Activated T-helper 1 cell treated with anti-CD3 and anti-CD28 coated beads, Interleukin-12 subunit alpha, Interleukin-12 subunit beta, Interleukin-2, Interleukin-4 antibody, amounts not matched to agents 30 ng/mL and 10 ng/mL and 1 ng/mL, durations not matched to agents 14 hours and 24 hours and 36 hours (primary cell): ENCODE measurements at regions of chrX and their contacts with region 1.

Region 1: GRCh38 chrX:70454441-70455365 is 10.1 kb downstream of the DLG3 start:
- DNase-seq: peak; percentile 67
- H3K4me3 Mint-ChIP-seq: peak overlapping the region; percentile 93
- H3K27ac Mint-ChIP-seq: peak overlapping the region; percentile 96
- H3K4me1 Mint-ChIP-seq: peaks cover 38% of the 10 kb centered on the region
- H3K27me3 Mint-ChIP-seq: no peaks in the 10 kb centered on the region

Region 2: DNA sequence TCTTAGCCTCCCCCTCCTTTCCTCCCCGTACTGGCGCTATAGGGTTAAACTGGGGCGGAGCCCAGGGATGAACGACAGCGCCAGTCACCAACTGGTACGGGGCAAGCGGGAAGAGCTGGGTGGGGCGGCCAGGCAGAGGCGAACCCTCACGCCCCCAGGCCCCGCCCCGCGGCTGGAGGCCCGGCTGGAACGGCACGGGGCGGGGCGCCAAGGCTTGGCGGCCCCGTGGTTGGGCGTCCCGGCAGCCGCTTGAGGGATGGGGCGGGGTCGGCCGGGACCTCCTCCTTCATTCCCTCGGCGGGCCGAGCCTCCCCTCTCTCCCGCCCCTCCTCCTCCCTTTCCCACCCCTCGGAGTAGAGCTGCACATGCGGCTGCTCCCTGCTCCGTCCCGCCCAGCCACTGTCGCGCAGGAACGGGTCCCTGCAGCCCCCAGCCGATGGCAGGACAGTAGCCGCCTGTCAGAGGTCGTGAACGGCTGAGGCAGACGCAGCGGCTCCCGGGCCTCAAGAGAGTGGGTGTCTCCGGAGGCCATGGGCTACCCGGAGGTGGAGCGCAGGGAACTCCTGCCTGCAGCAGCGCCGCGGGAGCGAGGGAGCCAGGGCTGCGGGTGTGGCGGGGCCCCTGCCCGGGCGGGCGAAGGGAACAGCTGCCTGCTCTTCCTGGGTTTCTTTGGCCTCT is 838.8 kb before region 1 on chrX and contains the start of gene EDA:
- intact Hi-C with region 1: loop called (anchors 10 kb)
- DNase-seq: peak; percentile 68
- H3K4me3 Mint-ChIP-seq: peak within 1 kb of the TSS; percentile 77
- H3K27ac Mint-ChIP-seq: no peak within 1 kb of the TSS
- H3K4me1 Mint-ChIP-seq: peaks cover 17% of the 10 kb centered on the region
- H3K27me3 Mint-ChIP-seq: peaks cover 14% of the 10 kb centered on the region
- total RNA-seq, gene EDA: 1.6 and 2.4 TPM in 2 replicates

Region 3: GRCh38 chrX:69793260-69793935 is 661.3 kb before region 1 on chrX:
- intact Hi-C with region 1: no loop called
- DNase-seq: no peak
- H3K4me3 Mint-ChIP-seq: no peak overlapping the region
- H3K27ac Mint-ChIP-seq: no peak overlapping the region
- H3K4me1 Mint-ChIP-seq: no peaks in the 10 kb centered on the region
- H3K27me3 Mint-ChIP-seq: peaks cover 1% of the 10 kb centered on the region

Region 4: DNA sequence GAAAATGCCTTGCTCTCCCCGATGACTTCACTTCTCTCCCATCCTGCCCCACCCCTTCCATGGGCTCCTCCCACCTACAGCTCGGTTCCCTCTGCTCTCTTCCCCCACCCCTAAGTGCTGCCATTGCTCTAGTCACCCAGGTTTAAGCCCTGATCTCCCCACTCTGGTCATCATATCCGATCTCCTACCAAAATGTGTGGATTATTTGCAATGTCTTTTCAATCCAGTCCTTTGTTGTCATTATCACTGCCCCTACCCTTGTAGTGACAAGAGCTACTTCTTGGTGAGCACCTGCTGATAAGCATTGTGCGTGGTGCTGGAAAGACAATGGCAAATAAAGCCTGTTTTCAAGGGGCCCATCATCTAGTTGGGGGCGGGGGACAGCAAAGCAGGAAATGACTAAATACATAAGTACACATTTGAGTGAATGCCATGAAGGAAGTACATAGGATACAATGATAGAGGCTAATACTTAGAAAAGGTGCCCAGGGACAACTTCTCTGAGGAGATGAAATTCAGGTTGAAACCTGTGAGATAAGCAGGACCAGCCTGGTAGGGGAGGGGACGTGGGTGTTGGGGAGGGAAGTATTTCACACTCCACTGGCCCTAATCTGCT is 53.7 kb after region 1 on chrX:
- intact Hi-C with region 1: loop called (anchors 1 kb)
- DNase-seq: no peak
- H3K4me3 Mint-ChIP-seq: peak overlapping the region; percentile 20
- H3K27ac Mint-ChIP-seq: peak overlapping the region; percentile 82
- H3K4me1 Mint-ChIP-seq: peaks cover 51% of the 10 kb centered on the region
- H3K27me3 Mint-ChIP-seq: no peaks in the 10 kb centered on the region

Region 5: GRCh38 chrX:70592091-70592490 is 137.4 kb after region 1 on chrX:
- intact Hi-C with region 1: loop called (anchors 1 kb)
- DNase-seq: peak; percentile 5
- H3K4me3 Mint-ChIP-seq: no peak overlapping the region
- H3K27ac Mint-ChIP-seq: peak overlapping the region; percentile 73
- H3K4me1 Mint-ChIP-seq: peaks cover 25% of the 10 kb centered on the region
- H3K27me3 Mint-ChIP-seq: no peaks in the 10 kb centered on the region

Region 6: GRCh38 chrX:70664726-70665125 is 210.0 kb after region 1 on chrX:
- intact Hi-C with region 1: loop called (anchors 1 kb)
- DNase-seq: no peak
- H3K4me3 Mint-ChIP-seq: no peak overlapping the region
- H3K27ac Mint-ChIP-seq: no peak overlapping the region
- H3K4me1 Mint-ChIP-seq: no peaks in the 10 kb centered on the region
- H3K27me3 Mint-ChIP-seq: peaks cover 4% of the 10 kb centered on the region

Region 7: DNA sequence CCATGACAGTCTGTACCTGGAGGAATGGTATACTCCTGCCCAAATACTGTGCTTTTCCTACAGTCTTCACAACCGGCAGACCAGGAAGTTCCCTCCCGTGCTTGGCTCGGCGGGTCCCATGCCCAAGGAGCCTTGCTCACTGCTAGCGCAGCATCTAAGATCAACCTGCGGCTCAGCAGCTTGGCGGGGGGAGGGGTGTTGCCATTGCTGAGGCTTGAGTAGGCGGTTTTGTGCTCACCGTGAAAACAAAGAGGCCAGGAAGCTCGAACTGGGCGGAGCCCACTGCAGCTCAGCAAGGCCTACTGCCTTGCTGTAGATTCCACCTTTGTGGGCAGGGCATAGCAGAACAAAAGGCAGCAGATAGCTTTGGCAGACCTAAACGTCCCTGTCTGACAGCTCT is 301.1 kb after region 1 on chrX:
- intact Hi-C with region 1: loop called (anchors 5 kb)
- DNase-seq: peak; percentile 50
- H3K4me3 Mint-ChIP-seq: no peak overlapping the region
- H3K27ac Mint-ChIP-seq: peak overlapping the region; percentile 8
- H3K4me1 Mint-ChIP-seq: peaks cover 27% of the 10 kb centered on the region
- H3K27me3 Mint-ChIP-seq: no peaks in the 10 kb centered on the region

Region 8: DNA sequence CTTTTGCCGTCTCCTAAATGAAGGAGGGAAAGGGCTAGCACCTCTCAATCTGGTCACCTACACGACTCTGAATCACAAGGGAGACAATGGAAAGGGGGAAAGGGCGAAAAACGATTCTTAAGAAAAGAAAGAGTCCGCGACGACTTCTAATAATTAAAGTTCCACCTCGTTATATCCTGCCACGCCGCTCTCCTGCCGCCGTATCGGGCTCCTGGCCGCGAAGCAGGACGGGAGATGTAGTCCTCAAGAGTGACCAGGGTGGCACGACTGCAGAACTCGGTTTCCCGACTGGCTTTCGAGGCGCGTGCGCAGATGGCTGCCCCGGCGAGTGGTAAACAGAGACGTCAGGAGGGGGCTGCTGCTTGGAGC is 640.8 kb after region 1 on chrX and contains the start of gene FOXO4:
- intact Hi-C with region 1: loop called (anchors 10 kb)
- DNase-seq: peak; percentile 81
- H3K4me3 Mint-ChIP-seq: peak within 1 kb of the TSS; percentile 93
- H3K27ac Mint-ChIP-seq: peak within 1 kb of the TSS; percentile 91
- H3K4me1 Mint-ChIP-seq: peaks cover 33% of the 10 kb centered on the region
- H3K27me3 Mint-ChIP-seq: peaks cover 8% of the 10 kb centered on the region
- total RNA-seq, gene FOXO4: 10.7 and 11.9 TPM in 2 replicates